Sigmoid colon (tissue), 7 donors: ENCODE measurements at regions of chr16 and their contacts with region 1.

Region 1: DNA sequence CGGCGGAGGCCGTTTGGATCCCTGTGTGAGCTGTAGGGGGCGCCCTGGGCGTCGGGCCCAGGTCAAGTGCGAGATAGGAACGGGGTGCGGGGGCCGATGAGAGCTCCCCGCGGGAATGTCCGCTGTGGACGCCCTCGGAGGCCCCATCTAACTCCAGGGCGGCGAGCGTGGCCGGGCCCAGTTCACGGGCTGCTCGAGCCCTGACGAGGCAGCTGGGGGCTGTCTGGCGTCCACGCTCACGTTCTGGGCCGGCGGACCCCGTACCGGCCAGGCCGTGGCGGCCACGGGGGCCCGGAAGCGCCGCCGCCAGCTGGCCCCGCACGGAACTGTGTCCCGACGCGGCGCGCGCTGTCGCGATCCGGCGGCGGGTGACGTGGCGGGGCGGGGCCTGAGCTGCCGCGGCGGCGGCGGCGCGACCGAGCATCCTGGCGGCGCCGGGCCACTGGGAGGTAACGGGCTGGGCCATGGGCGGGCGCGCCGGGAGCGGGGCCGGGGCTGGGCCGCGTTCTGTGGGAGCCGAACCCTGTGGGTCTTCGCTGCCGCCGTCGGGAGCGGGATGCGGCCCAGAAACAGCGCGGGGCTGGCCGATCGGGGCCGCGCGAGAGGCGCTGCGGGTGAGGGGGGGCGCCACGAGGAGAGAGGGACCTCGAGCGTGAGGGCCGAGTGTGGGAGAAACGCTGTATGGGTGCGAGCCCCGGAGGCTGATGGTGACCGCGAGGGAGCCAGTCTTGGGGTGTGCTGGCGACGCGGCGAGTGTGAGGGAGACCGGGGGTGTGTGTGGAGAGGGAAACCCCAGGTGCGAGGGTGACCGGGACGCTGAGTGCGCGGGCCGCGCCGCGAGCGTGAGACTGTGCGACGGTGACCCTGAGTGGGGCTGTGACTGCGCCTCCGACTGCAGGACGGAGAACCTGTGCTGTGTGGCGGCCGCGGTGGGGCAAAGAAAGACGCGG is at the start of gene SLC7A6:
- DNase-seq: peak; percentile 85
- H3K4me3 ChIP-seq: peak within 1 kb of the TSS; percentile 78 to 84 (median 82)
- H3K27ac ChIP-seq: peak within 1 kb of the TSS; percentile 97 to 99 (median 98)
- H3K4me1 ChIP-seq: peaks cover 0 to 39% (median 32%) of the 10 kb centered on the region in 4 donors
- H3K27me3 ChIP-seq: no peaks in the 10 kb centered on the region
- CTCF ChIP-seq: peak; percentile 19 to 62 (median 60)
- EP300 ChIP-seq: no peak
- POLR2A ChIP-seq: no peak
- total RNA-seq, gene SLC7A6: 26.8 to 40.7 (median 35.1) TPM

Region 2: GRCh38 chr16:68310761-68311511 is 46.5 kb after region 1 on chr16 and contains the starts of genes PRMT7 and SLC7A6OS:
- intact Hi-C with region 1: loop called (anchors 5 kb)
- DNase-seq: peak; percentile 93
- H3K4me3 ChIP-seq: peak within 1 kb of the TSS; percentile 67 to 88 (median 73)
- H3K27ac ChIP-seq: peak within 1 kb of the TSS; percentile 79 to 84 (median 80)
- H3K4me1 ChIP-seq: peaks cover 0 to 32% (median 26%) of the 10 kb centered on the region in 4 donors
- H3K27me3 ChIP-seq: no peaks in the 10 kb centered on the region
- CTCF ChIP-seq: peak in 1 of 4 experiments; percentile 21
- EP300 ChIP-seq: peak in 1 of 4 donors; percentile 30
- POLR2A ChIP-seq: peak; percentile 73 to 82
- total RNA-seq, gene PRMT7: 34.6 to 51.0 (median 45.6) TPM
- total RNA-seq, gene SLC7A6OS: 9.5 to 20.8 (median 11.8) TPM

Region 3: DNA sequence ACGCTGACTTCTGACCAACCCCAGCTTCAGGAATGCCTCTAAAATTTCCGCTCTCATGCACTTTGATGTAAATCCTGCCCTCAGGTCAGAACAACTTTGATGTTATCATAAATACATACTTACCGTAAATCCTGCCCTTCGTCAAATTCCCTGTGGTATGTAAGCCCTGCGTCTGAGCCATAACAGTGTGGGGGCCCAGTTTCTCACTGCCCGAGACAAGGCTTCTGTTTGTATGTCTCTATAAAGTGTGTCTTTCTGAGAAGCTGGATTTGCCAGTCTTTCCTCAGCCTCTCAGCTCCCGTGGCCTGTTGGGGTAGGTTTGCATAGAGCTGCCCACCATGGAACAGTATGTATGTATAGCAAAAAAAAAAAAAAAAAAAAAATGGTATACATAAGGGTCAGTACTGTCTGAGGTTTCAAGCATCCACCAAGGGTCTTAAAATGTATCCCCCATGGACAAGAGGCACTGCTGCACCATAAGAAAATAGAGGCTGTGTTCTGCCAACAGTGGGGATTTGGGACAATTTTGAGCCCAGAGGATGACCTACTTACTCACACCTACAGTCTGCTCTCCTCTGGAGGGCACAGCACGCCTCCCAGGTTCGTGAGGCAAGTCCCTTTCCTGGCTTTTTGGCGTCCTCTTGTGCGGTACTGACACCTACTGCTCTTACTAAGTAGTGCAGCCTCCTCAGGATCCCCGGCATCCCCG is 63.9 kb after region 1 on chr16:
- intact Hi-C with region 1: loop called (anchors 1 kb)
- DNase-seq: peak; percentile 90
- H3K4me3 ChIP-seq: no peak overlapping the region
- H3K27ac ChIP-seq: no peak overlapping the region
- H3K4me1 ChIP-seq: peaks cover 0 to 8% (median 0%) of the 10 kb centered on the region in 4 donors
- H3K27me3 ChIP-seq: no peaks in the 10 kb centered on the region
- CTCF ChIP-seq: peak; percentile 88 to 94 (median 90)
- EP300 ChIP-seq: no peak
- POLR2A ChIP-seq: no peak

Region 4: GRCh38 chr16:68658258-68659008 is 394.0 kb after region 1 on chr16:
- intact Hi-C with region 1: no loop called
- DNase-seq: no peak
- H3K4me3 ChIP-seq: no peak overlapping the region
- H3K27ac ChIP-seq: peak overlapping the region in 1 of 4 donors; percentile 7
- H3K4me1 ChIP-seq: peaks cover 0 to 13% (median 11%) of the 10 kb centered on the region in 4 donors
- H3K27me3 ChIP-seq: peaks cover 0 to 4% (median 0%) of the 10 kb centered on the region in 3 donors
- CTCF ChIP-seq: no peak
- EP300 ChIP-seq: no peak
- POLR2A ChIP-seq: no peak